H1 (cell line): ENCODE measurements at regions of chr19 and their contacts with region 1.

Region 1: GRCh38 chr19:3665681-3666544 is 34.4 kb downstream of the PIP5K1C start:
- DNase-seq: peak in 1 of 2 experiments; percentile 96
- H3K4me3 ChIP-seq: no peak overlapping the region
- H3K27ac ChIP-seq: no peak overlapping the region
- H3K4me1 ChIP-seq: peaks cover 0 to 11% (median 2%) of the 10 kb centered on the region in 4 experiments; a peak in 5 of 7 replicates
- H3K27me3 ChIP-seq: no peaks in the 10 kb centered on the region
- CTCF ChIP-seq: peak; percentile 82 to 97 (median 90)
- EP300 ChIP-seq: no peak
- POLR2A ChIP-seq: no peak
- RAD21 ChIP-seq: peak; percentile 90 to 94

Region 2: GRCh38 chr19:3649888-3650287 is 16.0 kb before region 1 on chr19:
- CTCF ChIA-PET with region 1: interaction called, 25 read pairs
- POLR2A ChIA-PET with region 1: interaction called, 5 read pairs
- DNase-seq: peak in 1 of 2 experiments; percentile 54
- H3K4me3 ChIP-seq: no peak overlapping the region
- H3K27ac ChIP-seq: no peak overlapping the region
- H3K4me1 ChIP-seq: no peaks in the 10 kb centered on the region
- H3K27me3 ChIP-seq: no peaks in the 10 kb centered on the region
- CTCF ChIP-seq: peak in 2 of 3 experiments; percentile 26 to 47; a peak in 3 of 4 replicates
- EP300 ChIP-seq: no peak
- POLR2A ChIP-seq: no peak
- RAD21 ChIP-seq: no peak; a peak in 1 of 4 replicates

Region 3: DNA sequence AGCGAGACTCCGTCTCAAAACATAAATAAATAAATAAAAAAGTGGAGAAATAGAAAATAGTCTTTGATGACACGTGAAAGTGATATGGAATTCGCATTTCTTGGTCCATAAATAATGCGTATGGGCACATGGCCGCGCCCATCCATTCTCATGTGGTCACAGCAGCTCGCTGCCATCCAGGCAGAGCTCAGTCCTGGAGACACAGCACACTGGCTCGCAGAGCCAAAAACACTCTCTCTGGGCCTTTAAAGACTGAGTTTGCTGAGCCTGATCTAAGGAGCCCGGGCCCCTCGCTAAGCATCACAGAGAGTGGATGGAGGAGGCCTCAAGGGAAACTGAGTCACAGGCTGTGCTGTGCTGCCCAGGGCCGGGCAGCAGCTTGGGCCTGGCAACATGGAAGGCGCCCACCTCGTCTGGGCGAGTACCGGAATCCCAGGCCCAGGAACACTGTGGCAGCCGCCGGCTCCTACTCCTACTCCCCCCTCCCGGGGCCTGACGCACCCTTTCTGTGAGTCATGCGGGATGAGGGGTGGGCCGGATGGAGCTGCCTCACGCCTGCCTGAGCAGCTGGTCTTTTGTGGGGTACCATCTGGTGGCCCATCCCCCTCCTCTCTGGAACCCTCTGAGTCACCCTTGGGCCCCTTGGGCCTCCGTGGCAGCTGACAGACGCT is 10.4 kb before region 1 on chr19:
- CTCF ChIA-PET with region 1: interaction called, 25 read pairs
- POLR2A ChIA-PET with region 1: interaction called, 5 read pairs
- DNase-seq: no peak
- H3K4me3 ChIP-seq: no peak overlapping the region
- H3K27ac ChIP-seq: no peak overlapping the region
- H3K4me1 ChIP-seq: no peaks in the 10 kb centered on the region
- H3K27me3 ChIP-seq: no peaks in the 10 kb centered on the region
- CTCF ChIP-seq: no peak
- EP300 ChIP-seq: no peak
- POLR2A ChIP-seq: no peak
- RAD21 ChIP-seq: no peak

Region 4: GRCh38 chr19:3692141-3693024 is 26.5 kb after region 1 on chr19:
- CTCF ChIA-PET with region 1: interaction called, 85 read pairs
- POLR2A ChIA-PET with region 1: interaction called, 12 read pairs
- DNase-seq: peak in 1 of 2 experiments; percentile 84
- H3K4me3 ChIP-seq: no peak overlapping the region
- H3K27ac ChIP-seq: no peak overlapping the region
- H3K4me1 ChIP-seq: peaks cover 0 to 11% (median 8%) of the 10 kb centered on the region in 4 experiments; a peak in 5 of 7 replicates
- H3K27me3 ChIP-seq: no peaks in the 10 kb centered on the region; a peak in 1 of 7 replicates
- CTCF ChIP-seq: peak; percentile 53 to 76 (median 70)
- EP300 ChIP-seq: no peak
- POLR2A ChIP-seq: no peak
- RAD21 ChIP-seq: peak; percentile 7 to 32; a peak in 3 of 4 replicates

Region 5: GRCh38 chr19:3700221-3701032 is 34.5 kb after region 1 on chr19 and contains the start of gene PIP5K1C:
- CTCF ChIA-PET with region 1: interaction called, 110 read pairs
- POLR2A ChIA-PET with region 1: interaction called, 3 read pairs
- DNase-seq: peak in 1 of 2 experiments; percentile 99
- H3K4me3 ChIP-seq: peak within 1 kb of the TSS; percentile 59 to 85 (median 72)
- H3K27ac ChIP-seq: no peak within 1 kb of the TSS
- H3K4me1 ChIP-seq: peaks cover 0 to 8% (median 2%) of the 10 kb centered on the region in 4 experiments; a peak in 3 of 7 replicates
- H3K27me3 ChIP-seq: no peaks in the 10 kb centered on the region; a peak in 2 of 7 replicates
- CTCF ChIP-seq: peak; percentile 75 to 84 (median 78)
- EP300 ChIP-seq: no peak
- POLR2A ChIP-seq: no peak
- RAD21 ChIP-seq: peak; percentile 64 to 72
- total RNA-seq, gene PIP5K1C: 31.3 and 32.9 TPM in 2 replicates

Region 6: GRCh38 chr19:3721131-3721886 is 55.4 kb after region 1 on chr19:
- CTCF ChIA-PET with region 1: interaction called, 46 read pairs
- POLR2A ChIA-PET with region 1: no interaction called
- DNase-seq: peak; percentile 90 to 100
- H3K4me3 ChIP-seq: peak overlapping the region; percentile 65 to 81 (median 70)
- H3K27ac ChIP-seq: no peak overlapping the region
- H3K4me1 ChIP-seq: peaks cover 0 to 16% (median 10%) of the 10 kb centered on the region in 4 experiments; a peak in 6 of 7 replicates
- H3K27me3 ChIP-seq: peaks cover 0 to 3% (median 0%) of the 10 kb centered on the region in 4 experiments; a peak in 2 of 7 replicates
- CTCF ChIP-seq: no peak
- EP300 ChIP-seq: peak in 1 of 2 experiments; percentile 94; a peak in 2 of 3 replicates
- POLR2A ChIP-seq: no peak
- RAD21 ChIP-seq: peak in 1 of 2 experiments; percentile 24; a peak in 1 of 4 replicates